Activated CD8-positive, alpha-beta T cell treated with anti-CD3 and anti-CD28 coated beads for 36 hours (primary cell): ENCODE measurements at regions of chr15 and their contacts with region 1.

Region 1: GRCh38 chr15:38683382-38684242 is 119.0 kb upstream of the RASGRP1 start:
- DNase-seq: peak; percentile 85
- ATAC-seq: peak; percentile 77
- H3K4me3 Mint-ChIP-seq: no peak overlapping the region
- H3K27ac Mint-ChIP-seq: peak overlapping the region; percentile 94
- H3K4me1 Mint-ChIP-seq: peaks cover 73% of the 10 kb centered on the region
- H3K27me3 Mint-ChIP-seq: no peaks in the 10 kb centered on the region
- CTCF ChIP-seq: peak; percentile 90

Region 2: DNA sequence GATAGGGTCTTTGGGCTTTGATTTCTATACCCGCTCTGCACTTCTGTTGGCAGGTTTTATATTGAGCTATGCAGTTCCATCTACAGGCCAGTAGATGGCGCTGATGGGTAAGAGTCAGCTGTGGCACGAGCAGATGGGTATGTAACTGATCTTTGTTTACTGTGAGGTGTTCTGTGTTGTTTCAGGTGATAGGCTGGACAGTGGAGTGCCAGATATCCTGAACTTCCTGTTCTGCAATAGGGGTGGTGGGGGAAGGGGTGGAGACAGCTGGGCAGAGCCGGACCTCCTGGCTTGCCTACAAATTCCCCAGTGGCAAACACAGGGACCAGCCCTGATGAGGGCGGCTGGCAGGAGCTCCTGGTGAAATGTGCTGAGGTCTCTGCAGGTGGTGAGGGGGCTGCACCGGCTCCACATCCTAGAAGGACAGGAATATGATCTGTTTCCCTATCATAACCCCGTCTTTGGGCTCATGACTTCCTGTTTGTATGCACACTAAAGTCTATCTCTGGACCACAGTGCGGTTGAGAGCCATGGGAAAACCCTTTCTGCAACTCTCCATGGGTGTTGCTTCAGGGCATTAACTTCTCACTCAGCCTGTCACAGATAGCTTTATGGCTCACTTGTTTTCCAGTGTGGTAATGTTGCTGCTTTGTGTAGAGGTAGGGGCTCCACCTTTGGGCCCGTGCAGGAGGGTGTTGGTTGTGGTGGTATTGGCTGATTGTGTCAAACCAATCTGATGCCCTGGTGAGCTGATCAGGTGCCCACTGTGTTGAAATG is 243.1 kb before region 1 on chr15:
- CTCF ChIA-PET with region 1: interaction called, 98 read pairs
- POLR2A ChIA-PET with region 1: no interaction called
- intact Hi-C with region 1: no loop called
- DNase-seq: peak; percentile 70
- ATAC-seq: peak; percentile 95
- H3K4me3 Mint-ChIP-seq: no peak overlapping the region
- H3K27ac Mint-ChIP-seq: no peak overlapping the region
- H3K4me1 Mint-ChIP-seq: peaks cover 9% of the 10 kb centered on the region
- H3K27me3 Mint-ChIP-seq: peaks cover 8% of the 10 kb centered on the region
- CTCF ChIP-seq: peak; percentile 96

Region 3: DNA sequence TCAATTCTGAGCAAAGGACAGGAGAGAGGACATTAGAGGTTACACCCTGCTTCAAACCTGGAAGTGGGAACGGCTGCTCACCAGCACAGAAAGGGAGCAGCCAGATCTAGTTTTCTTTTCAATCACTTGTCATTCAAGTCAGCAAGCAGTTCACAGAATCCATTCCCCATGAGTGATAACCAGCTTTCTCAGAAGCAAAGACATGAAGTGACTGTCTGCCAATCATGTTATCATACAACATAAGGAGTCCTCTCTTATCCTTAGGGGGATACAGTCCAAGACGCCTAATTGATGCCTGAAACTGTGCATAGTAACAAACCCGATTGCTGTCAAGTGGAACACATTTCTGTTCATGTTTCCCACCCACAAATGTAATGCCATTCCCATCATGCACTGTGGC is 175.0 kb before region 1 on chr15:
- CTCF ChIA-PET with region 1: interaction called, 44 read pairs
- POLR2A ChIA-PET with region 1: interaction called, 4 read pairs
- intact Hi-C with region 1: no loop called
- DNase-seq: peak; percentile 33
- ATAC-seq: peak; percentile 78
- H3K4me3 Mint-ChIP-seq: no peak overlapping the region
- H3K27ac Mint-ChIP-seq: peak overlapping the region; percentile 93
- H3K4me1 Mint-ChIP-seq: peaks cover 38% of the 10 kb centered on the region
- H3K27me3 Mint-ChIP-seq: no peaks in the 10 kb centered on the region
- CTCF ChIP-seq: no peak

Region 4: GRCh38 chr15:38536201-38536676 is 147.4 kb before region 1 on chr15:
- CTCF ChIA-PET with region 1: interaction called, 68 read pairs
- POLR2A ChIA-PET with region 1: interaction called, 16 read pairs
- intact Hi-C with region 1: no loop called
- DNase-seq: no peak
- ATAC-seq: no peak
- H3K4me3 Mint-ChIP-seq: no peak overlapping the region
- H3K27ac Mint-ChIP-seq: peak overlapping the region; percentile 97
- H3K4me1 Mint-ChIP-seq: peaks cover 98% of the 10 kb centered on the region
- H3K27me3 Mint-ChIP-seq: no peaks in the 10 kb centered on the region
- CTCF ChIP-seq: no peak

Region 5: DNA sequence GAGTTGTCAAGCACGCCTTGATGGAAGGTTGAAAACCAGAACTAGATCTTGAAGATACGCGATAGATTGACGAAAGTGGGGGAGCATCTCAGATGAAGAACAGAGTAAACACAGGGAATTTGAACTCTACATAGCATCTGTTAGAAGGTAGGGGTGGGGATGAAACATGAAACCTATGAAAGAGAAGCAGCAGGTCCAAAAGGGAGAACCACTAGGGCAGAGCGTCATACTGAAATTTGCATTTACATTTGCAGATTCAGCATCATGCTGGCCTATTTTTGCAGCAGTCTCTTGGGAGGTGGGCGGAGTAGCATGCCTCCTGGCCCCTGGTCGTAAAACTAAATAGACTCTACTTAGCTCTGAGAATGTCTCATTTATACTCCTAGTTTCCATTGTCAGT is 72.9 kb before region 1 on chr15:
- CTCF ChIA-PET with region 1: interaction called, 62 read pairs
- POLR2A ChIA-PET with region 1: interaction called, 23 read pairs
- intact Hi-C with region 1: loop called (anchors 5 kb)
- DNase-seq: peak; percentile 84
- ATAC-seq: peak; percentile 64
- H3K4me3 Mint-ChIP-seq: peak overlapping the region; percentile 5
- H3K27ac Mint-ChIP-seq: peak overlapping the region; percentile 89
- H3K4me1 Mint-ChIP-seq: peaks cover 73% of the 10 kb centered on the region
- H3K27me3 Mint-ChIP-seq: no peaks in the 10 kb centered on the region
- CTCF ChIP-seq: no peak

Region 6: DNA sequence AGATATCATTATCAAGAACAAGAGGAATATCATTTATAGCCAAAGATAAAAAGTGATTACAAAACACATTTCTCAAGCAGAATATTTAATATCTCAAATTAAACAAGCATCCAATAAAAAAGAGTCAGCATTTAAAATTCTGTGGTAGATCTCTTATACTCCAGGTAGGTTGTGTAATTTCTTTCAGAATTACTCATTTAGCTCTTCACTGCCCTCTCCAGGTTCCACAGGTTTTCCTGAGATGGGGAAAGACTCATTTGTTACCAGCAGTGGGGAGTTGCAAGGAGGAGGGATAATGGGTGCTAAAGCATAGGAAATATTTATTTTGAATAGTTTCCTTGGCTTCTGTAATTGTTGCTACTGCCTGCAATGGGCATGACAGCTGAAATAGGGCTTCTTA is 35.9 kb before region 1 on chr15:
- CTCF ChIA-PET with region 1: interaction called, 97 read pairs
- POLR2A ChIA-PET with region 1: interaction called, 9 read pairs
- intact Hi-C with region 1: loop called (anchors 2 kb)
- DNase-seq: no peak
- ATAC-seq: no peak
- H3K4me3 Mint-ChIP-seq: no peak overlapping the region
- H3K27ac Mint-ChIP-seq: no peak overlapping the region
- H3K4me1 Mint-ChIP-seq: peaks cover 71% of the 10 kb centered on the region
- H3K27me3 Mint-ChIP-seq: no peaks in the 10 kb centered on the region
- CTCF ChIP-seq: no peak

Region 7: DNA sequence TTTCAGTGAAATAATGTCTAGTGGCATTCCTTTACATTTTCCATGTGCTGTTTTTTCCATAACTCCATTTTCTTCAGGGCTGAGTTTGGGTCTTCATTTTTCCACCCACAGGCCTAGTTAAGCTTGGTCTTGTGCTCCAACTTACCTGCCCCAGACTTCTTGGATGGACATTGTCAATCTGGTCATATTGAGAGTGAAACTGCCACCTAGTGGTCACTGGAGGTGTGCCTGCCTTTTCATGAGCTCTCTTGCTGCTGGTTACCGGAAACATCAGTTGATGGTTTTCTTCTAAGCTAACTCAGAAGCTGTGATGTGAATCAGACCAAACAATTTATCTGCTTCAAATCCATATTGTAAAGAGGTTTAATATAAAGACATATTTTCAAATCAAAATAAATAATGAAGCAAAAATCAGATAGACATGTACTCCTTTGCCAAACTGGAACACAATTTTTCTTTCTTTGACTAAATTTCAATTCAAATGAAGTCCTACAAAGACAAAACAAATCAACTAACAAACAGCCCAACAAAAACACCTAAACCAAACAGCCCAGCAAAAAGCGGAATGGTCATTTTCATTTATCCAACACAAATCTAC is 16.1 kb after region 1 on chr15:
- CTCF ChIA-PET with region 1: interaction called, 219 read pairs
- POLR2A ChIA-PET with region 1: interaction called, 44 read pairs
- intact Hi-C with region 1: no loop called
- DNase-seq: peak; percentile 89
- ATAC-seq: peak; percentile 56
- H3K4me3 Mint-ChIP-seq: no peak overlapping the region
- H3K27ac Mint-ChIP-seq: peak overlapping the region; percentile 59
- H3K4me1 Mint-ChIP-seq: peaks cover 58% of the 10 kb centered on the region
- H3K27me3 Mint-ChIP-seq: no peaks in the 10 kb centered on the region
- CTCF ChIP-seq: peak; percentile 89

Region 8: GRCh38 chr15:38714309-38715072 is 30.9 kb after region 1 on chr15:
- CTCF ChIA-PET with region 1: no interaction called
- POLR2A ChIA-PET with region 1: no interaction called
- intact Hi-C with region 1: no loop called
- DNase-seq: no peak
- ATAC-seq: no peak
- H3K4me3 Mint-ChIP-seq: no peak overlapping the region
- H3K27ac Mint-ChIP-seq: no peak overlapping the region
- H3K4me1 Mint-ChIP-seq: no peaks in the 10 kb centered on the region
- H3K27me3 Mint-ChIP-seq: peaks cover 3% of the 10 kb centered on the region
- CTCF ChIP-seq: no peak

Region 9: GRCh38 chr15:38745126-38745525 is 61.5 kb after region 1 on chr15:
- CTCF ChIA-PET with region 1: no interaction called
- POLR2A ChIA-PET with region 1: no interaction called
- intact Hi-C with region 1: no loop called
- DNase-seq: no peak
- ATAC-seq: no peak
- H3K4me3 Mint-ChIP-seq: no peak overlapping the region
- H3K27ac Mint-ChIP-seq: no peak overlapping the region
- H3K4me1 Mint-ChIP-seq: no peaks in the 10 kb centered on the region
- H3K27me3 Mint-ChIP-seq: peaks cover 3% of the 10 kb centered on the region
- CTCF ChIP-seq: no peak

Region 10: DNA sequence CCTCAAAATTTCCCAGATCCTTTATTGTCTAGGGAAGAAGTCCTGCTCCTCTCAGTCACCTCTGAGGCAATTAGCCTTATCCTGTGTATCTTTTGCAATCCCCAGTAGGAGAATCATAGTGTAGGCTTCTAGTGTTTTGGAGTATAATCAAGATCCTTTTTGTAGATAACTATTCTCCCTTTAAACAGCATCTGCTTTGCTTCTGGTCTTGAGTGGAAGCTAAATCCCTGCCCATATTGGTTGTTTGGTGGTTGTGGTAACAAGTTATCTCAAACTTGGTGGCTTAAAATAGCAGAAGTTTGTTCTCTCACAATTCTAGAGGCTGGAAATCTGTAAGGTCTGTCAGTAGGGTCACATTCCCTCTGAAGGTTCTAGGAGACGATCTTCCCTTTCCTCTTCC is 98.5 kb after region 1 on chr15:
- CTCF ChIA-PET with region 1: no interaction called
- POLR2A ChIA-PET with region 1: no interaction called
- intact Hi-C with region 1: no loop called
- DNase-seq: no peak
- ATAC-seq: no peak
- H3K4me3 Mint-ChIP-seq: no peak overlapping the region
- H3K27ac Mint-ChIP-seq: no peak overlapping the region
- H3K4me1 Mint-ChIP-seq: no peaks in the 10 kb centered on the region
- H3K27me3 Mint-ChIP-seq: peaks cover 19% of the 10 kb centered on the region
- CTCF ChIP-seq: no peak